Activated CD4-positive, alpha-beta memory T cell treated with anti-CD3 and anti-CD28 coated beads for 36 hours (primary cell): ENCODE measurements at regions of chr2 and their contacts with region 1.

Region 1: DNA sequence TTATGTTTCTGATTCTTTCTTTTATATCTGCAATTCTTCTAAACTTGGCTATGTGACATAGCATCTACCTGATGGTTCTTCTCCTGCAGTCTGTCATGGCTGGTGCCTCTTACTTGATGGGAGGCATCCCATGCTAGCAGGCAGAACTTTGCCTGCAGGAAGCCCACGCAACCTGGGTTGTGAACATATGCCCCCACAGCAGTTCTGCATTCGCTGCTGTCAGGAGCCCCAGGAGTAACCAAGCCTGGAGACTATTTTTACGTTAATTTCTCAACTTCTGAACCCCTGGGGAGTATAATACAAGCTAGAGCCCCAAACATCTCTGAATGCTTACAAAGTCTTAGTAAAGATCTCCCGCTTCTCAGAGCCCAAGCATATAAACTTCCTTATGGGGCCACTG is 12.1 kb downstream of the FAM168B start:
- DNase-seq: no peak
- H3K4me3 Mint-ChIP-seq: no peak overlapping the region
- H3K27ac Mint-ChIP-seq: no peak overlapping the region
- H3K4me1 Mint-ChIP-seq: peaks cover 38% of the 10 kb centered on the region
- H3K27me3 Mint-ChIP-seq: no peaks in the 10 kb centered on the region

Region 2: DNA sequence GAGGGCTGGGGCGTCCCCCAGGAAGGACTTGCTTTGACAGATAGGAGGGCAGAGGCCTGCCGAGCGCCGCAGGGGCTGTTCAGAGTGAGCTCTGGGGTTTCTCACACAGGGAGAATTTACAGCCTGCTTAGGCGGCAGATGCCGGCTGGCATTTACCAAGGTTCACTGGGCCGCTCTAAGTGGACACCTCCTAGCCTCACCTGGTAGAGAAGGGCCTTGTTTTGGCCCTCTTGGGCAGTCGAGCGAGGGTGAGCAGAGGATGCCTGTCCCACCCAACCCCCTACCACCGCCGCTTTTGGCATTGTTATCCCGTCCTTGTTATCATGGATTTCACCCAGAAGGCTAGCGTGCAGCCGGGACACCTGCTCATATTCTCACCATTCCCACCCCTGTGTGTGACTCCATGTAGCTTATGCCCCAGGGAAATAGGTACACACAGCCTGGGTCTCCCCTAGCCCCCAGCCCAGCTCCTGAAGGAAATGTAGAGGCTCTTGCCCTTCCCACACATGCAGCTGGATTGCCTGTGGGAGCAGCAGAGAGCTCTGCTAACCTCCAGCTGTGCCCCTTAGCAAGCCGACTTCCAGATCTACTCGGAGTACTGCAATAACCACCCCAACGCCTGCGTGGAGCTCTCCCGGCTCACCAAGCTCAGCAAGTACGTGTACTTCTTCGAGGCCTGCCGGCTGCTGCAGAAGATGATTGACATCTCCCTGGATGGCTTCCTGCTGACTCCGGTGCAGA is 40.4 kb before region 1 on chr2:
- CTCF ChIA-PET with region 1: no interaction called
- POLR2A ChIA-PET with region 1: no interaction called
- intact Hi-C with region 1: loop called (anchors 5 kb)
- DNase-seq: no peak
- H3K4me3 Mint-ChIP-seq: no peak overlapping the region
- H3K27ac Mint-ChIP-seq: no peak overlapping the region
- H3K4me1 Mint-ChIP-seq: peaks cover 28% of the 10 kb centered on the region
- H3K27me3 Mint-ChIP-seq: no peaks in the 10 kb centered on the region

Region 3: DNA sequence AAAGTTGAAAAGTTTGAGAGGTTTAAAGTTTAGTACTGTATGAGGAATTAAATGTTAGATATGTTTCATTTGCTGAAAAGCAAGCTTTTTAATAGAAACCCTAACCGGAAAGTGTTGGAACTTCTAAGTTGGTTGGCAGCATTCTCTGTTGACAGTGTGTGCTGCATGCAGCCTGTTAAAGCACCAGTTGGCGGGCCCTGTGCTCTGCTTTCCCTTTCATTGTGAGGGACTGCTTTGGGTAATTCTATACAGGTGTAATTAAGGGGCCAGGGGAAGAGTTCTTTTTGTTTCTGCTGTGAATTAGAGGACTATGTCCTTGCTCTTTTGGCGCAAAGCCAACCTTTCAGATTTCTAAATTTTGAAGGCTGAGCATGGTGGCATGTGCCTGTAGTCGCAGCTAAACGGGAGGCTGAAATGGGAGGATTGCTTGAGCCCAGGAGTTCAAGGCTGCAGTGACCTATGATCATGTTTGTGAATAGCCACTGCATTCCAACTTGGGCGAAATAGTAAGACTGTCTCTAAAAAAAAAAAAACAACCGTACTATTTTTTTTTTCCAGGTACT is 44.1 kb after region 1 on chr2:
- CTCF ChIA-PET with region 1: no interaction called
- POLR2A ChIA-PET with region 1: no interaction called
- intact Hi-C with region 1: no loop called
- DNase-seq: no peak
- H3K4me3 Mint-ChIP-seq: no peak overlapping the region
- H3K27ac Mint-ChIP-seq: no peak overlapping the region
- H3K4me1 Mint-ChIP-seq: no peaks in the 10 kb centered on the region
- H3K27me3 Mint-ChIP-seq: no peaks in the 10 kb centered on the region